ENCODE measurements at regions of chr2 and their contacts with region 1.

Region 1: GRCh38 chr2:68742626-68743415 is 8.2 kb downstream of the ARHGAP25 start:
- DNase-seq: no peak
- H3K4me3 ChIP-seq: no peak overlapping the region
- H3K27ac ChIP-seq: no peak overlapping the region
- H3K4me1 ChIP-seq: no peaks in the 10 kb centered on the region
- H3K27me3 ChIP-seq: no peaks in the 10 kb centered on the region
- CTCF ChIP-seq: no peak

Region 2: GRCh38 chr2:68237404-68237803 is 505.4 kb before region 1 on chr2:
- intact Hi-C with region 1: no loop called
- DNase-seq: peak in 1 of 5 donors; percentile 28
- H3K4me3 ChIP-seq: no peak overlapping the region
- H3K27ac ChIP-seq: no peak overlapping the region
- H3K4me1 ChIP-seq: peaks cover 0 to 27% (median 4%) of the 10 kb centered on the region in 3 donors
- H3K27me3 ChIP-seq: no peaks in the 10 kb centered on the region
- CTCF ChIP-seq: no peak

Region 3: DNA sequence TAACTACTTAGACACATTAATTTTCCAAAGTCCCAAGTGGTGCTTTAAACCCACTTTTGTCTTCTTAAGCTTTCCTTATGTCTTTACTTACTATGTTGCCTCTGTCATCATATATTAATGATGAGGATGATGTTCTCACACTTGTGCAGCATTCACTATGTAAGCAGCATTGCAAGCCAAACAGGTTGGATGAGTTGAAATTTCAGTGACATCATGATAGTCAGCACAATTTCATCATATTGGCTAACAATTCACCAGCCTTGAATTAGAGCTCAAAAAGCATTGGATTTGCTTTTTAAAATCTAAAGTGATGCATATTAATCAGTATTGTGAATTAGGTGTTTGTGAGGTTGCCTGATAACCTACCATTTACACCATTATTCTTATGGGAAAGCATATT is 267.7 kb before region 1 on chr2:
- intact Hi-C with region 1: no loop called
- DNase-seq: no peak
- H3K4me3 ChIP-seq: no peak overlapping the region
- H3K27ac ChIP-seq: no peak overlapping the region
- H3K4me1 ChIP-seq: no peaks in the 10 kb centered on the region
- H3K27me3 ChIP-seq: no peaks in the 10 kb centered on the region
- CTCF ChIP-seq: no peak

Region 4: DNA sequence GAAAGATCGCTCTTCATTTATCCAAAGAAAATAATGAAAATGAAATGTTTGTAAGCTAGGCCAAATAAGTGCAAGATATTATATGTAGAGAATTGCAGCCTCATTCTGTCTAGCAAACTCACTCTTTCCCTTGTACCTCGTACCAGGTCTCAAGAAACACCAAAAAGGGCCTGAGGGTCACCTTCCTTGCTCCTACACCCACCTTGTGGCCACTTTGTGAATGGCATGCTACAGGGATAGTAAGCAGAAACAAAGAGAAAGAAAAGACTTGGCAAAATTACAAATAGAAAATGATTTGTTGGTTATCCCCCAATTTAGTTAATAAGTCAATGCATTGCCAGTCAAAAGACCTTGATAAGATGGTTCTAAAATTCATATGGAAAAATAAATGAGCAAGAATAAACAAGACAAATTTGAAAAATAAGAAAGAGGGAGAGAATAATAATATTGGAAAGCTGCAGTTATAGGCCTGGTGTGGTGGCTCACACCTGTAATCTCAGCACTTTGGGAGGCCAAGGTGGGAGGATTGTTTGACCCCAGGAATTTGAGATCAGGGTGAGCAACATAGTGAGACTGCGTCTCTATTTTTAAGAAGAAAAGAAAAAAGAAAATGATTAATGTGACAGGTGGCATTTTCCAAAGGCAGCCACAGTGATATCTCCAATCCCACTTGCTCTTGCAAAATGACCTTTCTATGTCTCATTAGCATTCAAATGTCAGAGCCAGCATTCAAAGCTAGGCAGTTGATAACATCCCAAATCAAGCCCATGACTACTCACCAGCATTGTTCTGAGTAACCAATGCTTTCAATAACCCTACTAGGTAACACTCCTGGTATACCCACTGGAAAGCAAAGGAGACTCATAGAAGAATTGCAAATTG is 167.2 kb after region 1 on chr2:
- intact Hi-C with region 1: loop called (anchors 10 kb)
- DNase-seq: peak in 4 of 5 donors; percentile 65 to 86 (median 72)
- H3K4me3 ChIP-seq: no peak overlapping the region
- H3K27ac ChIP-seq: no peak overlapping the region
- H3K4me1 ChIP-seq: peaks cover 0 to 3% (median 0%) of the 10 kb centered on the region in 3 donors
- H3K27me3 ChIP-seq: no peaks in the 10 kb centered on the region
- CTCF ChIP-seq: peak; percentile 88

Region 5: GRCh38 chr2:68994864-68995263 is 252.0 kb after region 1 on chr2:
- intact Hi-C with region 1: no loop called
- DNase-seq: no peak
- H3K4me3 ChIP-seq: no peak overlapping the region
- H3K27ac ChIP-seq: no peak overlapping the region
- H3K4me1 ChIP-seq: no peaks in the 10 kb centered on the region
- H3K27me3 ChIP-seq: no peaks in the 10 kb centered on the region
- CTCF ChIP-seq: no peak